IMR-90 (cell line): ENCODE measurements at regions of chr3 and their contacts with region 1.

Region 1: GRCh38 chr3:186570096-186570940 is at the start of gene DNAJB11:
- DNase-seq: peak; percentile 100
- ATAC-seq: peak; percentile 91
- H3K4me3 ChIP-seq: peak within 1 kb of the TSS; percentile 81
- H3K27ac ChIP-seq: peak within 1 kb of the TSS; percentile 58
- H3K4me1 ChIP-seq: peaks cover 6% of the 10 kb centered on the region; the same call in 1 of the 2 replicates
- H3K27me3 ChIP-seq: no peaks in the 10 kb centered on the region
- CTCF ChIP-seq: no peak
- POLR2A ChIP-seq: peak; percentile 88
- RAD21 ChIP-seq: no peak
- total RNA-seq, gene DNAJB11: 27.4 and 62.8 TPM in 2 replicates

Region 2: GRCh38 chr3:186514296-186515002 is 55.9 kb before region 1 on chr3:
- CTCF ChIA-PET with region 1: no interaction called
- POLR2A ChIA-PET with region 1: no interaction called
- dilution Hi-C with region 1: no loop called
- in situ Hi-C with region 1: no loop called
- intact Hi-C with region 1: no loop called
- DNase-seq: no peak
- ATAC-seq: no peak
- H3K4me3 ChIP-seq: no peak overlapping the region
- H3K27ac ChIP-seq: no peak overlapping the region
- H3K4me1 ChIP-seq: no peaks in the 10 kb centered on the region
- H3K27me3 ChIP-seq: peaks cover 29% of the 10 kb centered on the region
- CTCF ChIP-seq: 0 out of 2 replicates have a peak, but pooled peaks have one; percentile 17
- POLR2A ChIP-seq: no peak
- RAD21 ChIP-seq: no peak

Region 3: GRCh38 chr3:186783073-186783730 is 212.9 kb after region 1 on chr3 and contains the start of gene EIF4A2:
- CTCF ChIA-PET with region 1: no interaction called
- POLR2A ChIA-PET with region 1: no interaction called
- dilution Hi-C with region 1: no loop called
- in situ Hi-C with region 1: no loop called
- intact Hi-C with region 1: loop called (anchors 10 kb)
- DNase-seq: peak; percentile 86
- ATAC-seq: peak; percentile 84
- H3K4me3 ChIP-seq: peak within 1 kb of the TSS; percentile 80
- H3K27ac ChIP-seq: peak within 1 kb of the TSS; percentile 93
- H3K4me1 ChIP-seq: no peaks in the 10 kb centered on the region; the same call in 1 of the 2 replicates
- H3K27me3 ChIP-seq: no peaks in the 10 kb centered on the region
- CTCF ChIP-seq: no peak
- POLR2A ChIP-seq: peak; percentile 100
- RAD21 ChIP-seq: no peak
- total RNA-seq, gene EIF4A2: 310 and 449 TPM in 2 replicates

Region 4: GRCh38 chr3:186821429-186822367 is 251.4 kb after region 1 on chr3:
- CTCF ChIA-PET with region 1: no interaction called
- POLR2A ChIA-PET with region 1: no interaction called
- dilution Hi-C with region 1: no loop called
- in situ Hi-C with region 1: no loop called
- intact Hi-C with region 1: loop called (anchors 1 kb)
- DNase-seq: peak; percentile 83
- ATAC-seq: peak; percentile 69
- H3K4me3 ChIP-seq: peak overlapping the region; percentile 35; the same call in 1 of the 2 replicates
- H3K27ac ChIP-seq: peak overlapping the region; percentile 98
- H3K4me1 ChIP-seq: peaks cover 14% of the 10 kb centered on the region
- H3K27me3 ChIP-seq: no peaks in the 10 kb centered on the region
- CTCF ChIP-seq: peak; percentile 77
- POLR2A ChIP-seq: no peak
- RAD21 ChIP-seq: peak; percentile 73